Colonic mucosa (tissue), 4 donors: ENCODE measurements at regions of chr7 and their contacts with region 1.

Region 1: GRCh38 chr7:32937344-32938174 is 19.7 kb upstream of the FKBP9 start:
- DNase-seq: peak; percentile 42
- H3K4me3 ChIP-seq: no peak overlapping the region
- H3K27ac ChIP-seq: no peak overlapping the region
- H3K4me1 ChIP-seq: no peaks in the 10 kb centered on the region
- H3K27me3 ChIP-seq: no peaks in the 10 kb centered on the region
- CTCF ChIP-seq: no peak

Region 2: GRCh38 chr7:32896564-32897347 is 40.8 kb before region 1 on chr7:
- intact Hi-C with region 1: loop called (anchors 5 kb)
- DNase-seq: no peak
- H3K4me3 ChIP-seq: no peak overlapping the region
- H3K27ac ChIP-seq: no peak overlapping the region
- H3K4me1 ChIP-seq: peaks cover 6% of the 10 kb centered on the region
- H3K27me3 ChIP-seq: no peaks in the 10 kb centered on the region
- CTCF ChIP-seq: no peak

Region 3: GRCh38 chr7:33143996-33144718 is 206.6 kb after region 1 on chr7:
- intact Hi-C with region 1: no loop called
- DNase-seq: no peak
- H3K4me3 ChIP-seq: no peak overlapping the region
- H3K27ac ChIP-seq: no peak overlapping the region
- H3K4me1 ChIP-seq: no peaks in the 10 kb centered on the region
- H3K27me3 ChIP-seq: no peaks in the 10 kb centered on the region
- CTCF ChIP-seq: no peak

Region 4: GRCh38 chr7:34048445-34048844 is 1110.9 kb after region 1 on chr7:
- intact Hi-C with region 1: no loop called
- DNase-seq: no peak
- H3K4me3 ChIP-seq: no peak overlapping the region
- H3K27ac ChIP-seq: no peak overlapping the region
- H3K4me1 ChIP-seq: no peaks in the 10 kb centered on the region
- H3K27me3 ChIP-seq: no peaks in the 10 kb centered on the region
- CTCF ChIP-seq: no peak